A549 (cell line): ENCODE measurements at regions of chr2 and their contacts with region 1.

Region 1: DNA sequence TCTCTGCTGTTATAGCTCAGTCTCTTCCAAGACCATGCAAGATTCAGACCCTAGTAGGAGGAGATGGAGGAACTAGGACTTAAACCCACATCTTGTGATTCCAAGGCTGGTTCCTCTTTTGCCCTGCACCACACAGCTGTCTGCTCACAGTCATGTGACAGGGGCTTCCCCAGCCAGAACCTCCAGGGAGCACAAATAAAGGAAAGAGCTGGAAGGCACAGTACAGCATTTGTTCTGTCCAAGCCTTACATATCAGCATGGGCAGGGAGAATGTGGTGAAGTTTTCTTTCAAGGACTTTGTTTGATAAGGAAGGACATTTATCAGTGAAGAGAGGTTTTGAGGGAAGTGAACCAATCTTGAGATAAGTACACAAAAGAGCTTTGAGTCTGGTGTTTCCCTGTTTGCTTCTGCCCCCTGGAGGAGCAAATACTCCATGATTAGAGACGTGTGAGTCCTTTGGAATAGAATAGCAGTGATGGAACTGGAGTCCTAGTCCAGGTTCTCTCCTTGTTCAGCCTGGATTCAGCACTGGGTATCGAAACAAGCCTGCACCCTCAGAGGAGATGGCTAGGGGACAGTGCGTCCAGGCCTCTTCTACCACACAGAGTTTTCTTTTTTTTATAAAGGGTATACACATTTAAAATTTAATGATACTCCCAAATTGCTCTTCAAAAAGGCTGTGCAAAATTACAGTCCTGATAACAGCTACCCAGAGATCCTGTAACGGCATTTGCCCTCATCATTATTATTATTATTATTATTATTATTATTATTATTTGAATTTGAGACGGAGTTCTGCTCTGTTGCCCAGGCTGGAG is 24.6 kb upstream of the CASP10 start:
- DNase-seq: peak; percentile 75 to 84
- ATAC-seq: peak; percentile 94 to 96
- H3K4me3 ChIP-seq: no peak overlapping the region
- H3K27ac ChIP-seq: peak overlapping the region; percentile 77 to 85
- H3K4me1 ChIP-seq: peaks cover 16% of the 10 kb centered on the region
- CTCF ChIP-seq: peak; percentile 85
- EP300 ChIP-seq: no peak
- POLR2A ChIP-seq: no peak
- RAD21 ChIP-seq: peak; percentile 94

Region 2: GRCh38 chr2:200901459-200902072 is 256.8 kb before region 1 on chr2:
- CTCF ChIA-PET with region 1: interaction called, 31 read pairs
- POLR2A ChIA-PET with region 1: interaction called, 3 read pairs
- DNase-seq: peak; percentile 90 to 94
- ATAC-seq: peak; percentile 95 to 98
- H3K4me3 ChIP-seq: no peak overlapping the region
- H3K27ac ChIP-seq: no peak overlapping the region
- H3K4me1 ChIP-seq: peaks cover 12% of the 10 kb centered on the region; the same call in 1 of the 3 replicates
- CTCF ChIP-seq: peak; percentile 87
- EP300 ChIP-seq: no peak
- POLR2A ChIP-seq: no peak
- RAD21 ChIP-seq: peak; percentile 85 to 88

Region 3: DNA sequence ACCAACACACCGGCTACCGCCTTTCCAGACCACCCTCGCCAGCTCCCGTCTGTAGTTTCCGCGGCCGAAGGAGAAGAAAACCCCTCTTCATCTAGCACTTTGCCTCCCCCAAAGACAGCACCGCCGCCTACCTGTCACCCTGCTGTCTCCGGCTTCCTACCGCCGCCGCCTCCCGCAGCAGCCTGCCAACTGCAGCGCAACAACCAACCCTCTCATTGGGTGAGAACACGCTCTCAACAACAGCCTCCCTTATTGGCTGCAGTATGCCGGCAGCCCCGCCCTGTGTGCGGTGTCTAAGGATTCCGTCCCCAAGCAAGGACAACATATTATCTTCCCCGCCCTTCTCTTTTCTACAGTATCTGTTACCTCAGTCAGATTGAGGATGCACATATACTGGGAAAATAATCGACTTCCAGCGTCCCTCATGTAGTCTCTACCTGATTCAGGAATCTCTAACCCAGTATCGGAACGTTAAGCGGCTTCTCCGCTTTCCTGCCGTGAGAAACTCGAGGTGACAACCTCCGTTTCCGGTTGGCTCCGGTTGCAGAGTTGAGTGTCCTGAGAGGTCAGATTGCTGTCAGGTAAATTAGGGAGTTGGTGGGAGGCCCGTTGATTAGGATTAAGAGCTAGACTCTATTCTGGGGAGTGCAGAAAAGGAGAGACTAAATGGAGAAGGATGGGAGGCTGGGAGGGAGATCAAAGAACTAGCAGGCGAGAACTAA is 86.7 kb before region 1 on chr2 and contains the starts of genes HYCC2 and NDUFB3:
- CTCF ChIA-PET with region 1: interaction called, 26 read pairs
- POLR2A ChIA-PET with region 1: no interaction called
- DNase-seq: peak; percentile 96 to 97
- ATAC-seq: peak; percentile 100
- H3K4me3 ChIP-seq: peak within 1 kb of the TSS; percentile 61
- H3K27ac ChIP-seq: peak within 1 kb of the TSS; percentile 91 to 96
- H3K4me1 ChIP-seq: peaks cover 28% of the 10 kb centered on the region; the same call in 2 of the 3 replicates
- CTCF ChIP-seq: peak; percentile 11; the same call in 1 of the 3 replicates
- EP300 ChIP-seq: no peak
- POLR2A ChIP-seq: peak; percentile 53
- RAD21 ChIP-seq: no peak; a peak in 1 of 5 replicates
- polyA plus RNA-seq, gene HYCC2: 5.8 and 7.3 TPM in 2 replicates
- polyA plus RNA-seq, gene NDUFB3: 103 and 162 TPM in 2 replicates

Region 4: DNA sequence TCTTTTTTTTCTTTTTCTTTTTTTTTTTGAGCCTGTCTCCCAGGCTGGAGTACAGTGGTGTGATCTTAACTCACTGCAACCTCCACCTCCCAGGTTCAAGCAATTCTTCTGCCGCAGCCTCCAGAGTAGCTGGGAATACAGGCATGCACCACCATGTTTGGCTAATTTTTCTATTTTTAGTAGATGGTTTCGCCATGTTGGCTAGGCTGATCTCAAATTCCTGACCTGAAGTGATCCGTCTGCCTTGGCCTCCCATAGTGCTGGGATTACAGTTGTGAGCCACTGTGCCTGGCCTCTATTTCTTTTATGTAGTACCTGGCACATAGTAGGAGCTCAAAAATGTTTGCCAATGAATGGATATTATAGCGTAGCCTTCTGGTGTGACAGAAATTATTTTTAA is 49.1 kb before region 1 on chr2:
- CTCF ChIA-PET with region 1: interaction called, 16 read pairs
- POLR2A ChIA-PET with region 1: no interaction called
- DNase-seq: no peak
- ATAC-seq: no peak
- H3K4me3 ChIP-seq: no peak overlapping the region
- H3K27ac ChIP-seq: no peak overlapping the region
- H3K4me1 ChIP-seq: no peaks in the 10 kb centered on the region; the same call in 2 of the 3 replicates
- CTCF ChIP-seq: no peak
- EP300 ChIP-seq: no peak
- POLR2A ChIP-seq: no peak
- RAD21 ChIP-seq: no peak

Region 5: GRCh38 chr2:201130524-201131186 is 27.7 kb before region 1 on chr2:
- CTCF ChIA-PET with region 1: interaction called, 25 read pairs
- POLR2A ChIA-PET with region 1: no interaction called
- DNase-seq: peak in 1 of 2 experiments; percentile 52
- ATAC-seq: peak; percentile 55 to 65; a peak in 5 of 6 replicates
- H3K4me3 ChIP-seq: no peak overlapping the region
- H3K27ac ChIP-seq: peak overlapping the region; percentile 86; a peak in 5 of 6 replicates
- H3K4me1 ChIP-seq: peaks cover 73% of the 10 kb centered on the region
- CTCF ChIP-seq: no peak
- EP300 ChIP-seq: no peak
- POLR2A ChIP-seq: no peak
- RAD21 ChIP-seq: no peak